Common myeloid progenitor, CD34-positive (primary cell): ENCODE measurements at regions of chr18 and their contacts with region 1.

Region 1: DNA sequence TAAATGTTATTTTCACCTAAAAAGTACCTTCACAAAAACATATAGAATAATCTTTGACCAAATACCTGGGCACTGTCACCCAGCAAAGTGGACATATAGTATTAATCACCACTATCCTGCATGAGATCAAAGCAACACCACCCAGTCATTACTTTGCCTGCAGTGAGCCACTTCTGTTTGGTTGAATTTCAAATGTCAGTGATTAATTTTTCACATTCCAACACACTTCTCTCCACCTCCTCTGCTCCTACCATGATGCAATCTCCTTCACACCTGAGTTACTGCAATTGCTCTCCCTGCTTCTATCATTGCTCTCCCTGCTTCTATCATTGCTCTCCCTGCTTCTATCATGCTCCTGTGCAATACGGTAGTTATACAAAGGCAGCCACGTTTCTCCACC is 106.0 kb upstream of the NETO1 start:
- DNase-seq: no peak
- H3K4me3 ChIP-seq: no peak overlapping the region
- H3K27ac ChIP-seq: no peak overlapping the region
- H3K4me1 ChIP-seq: no peaks in the 10 kb centered on the region
- H3K27me3 ChIP-seq: no peaks in the 10 kb centered on the region

Region 2: DNA sequence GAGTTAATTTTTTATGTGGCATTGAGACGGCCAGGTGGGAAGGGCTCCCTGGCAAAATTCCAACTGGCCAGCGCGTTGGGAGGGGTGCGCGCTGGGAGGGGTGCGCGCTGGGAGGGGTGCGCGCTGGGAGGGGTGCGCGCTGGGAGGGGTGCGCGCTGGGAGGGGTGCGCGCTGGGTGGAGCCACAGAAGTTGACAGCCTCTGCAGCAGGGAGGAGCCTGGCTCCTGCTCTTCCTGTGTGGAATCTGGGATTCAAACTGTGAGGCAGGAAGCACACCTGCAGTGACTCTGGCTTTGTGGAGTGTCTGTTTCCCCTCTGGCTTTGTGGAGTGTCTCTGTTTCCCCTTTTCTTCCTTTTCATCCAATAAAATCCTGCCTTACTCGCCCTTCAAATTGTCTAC is 281.7 kb before region 1 on chr18:
- CTCF ChIA-PET with region 1: no interaction called
- POLR2A ChIA-PET with region 1: no interaction called
- DNase-seq: no peak
- H3K4me3 ChIP-seq: no peak overlapping the region
- H3K27ac ChIP-seq: no peak overlapping the region
- H3K4me1 ChIP-seq: no peaks in the 10 kb centered on the region
- H3K27me3 ChIP-seq: peaks cover 0 to 15% (median 6%) of the 10 kb centered on the region in 5 experiments

Region 3: DNA sequence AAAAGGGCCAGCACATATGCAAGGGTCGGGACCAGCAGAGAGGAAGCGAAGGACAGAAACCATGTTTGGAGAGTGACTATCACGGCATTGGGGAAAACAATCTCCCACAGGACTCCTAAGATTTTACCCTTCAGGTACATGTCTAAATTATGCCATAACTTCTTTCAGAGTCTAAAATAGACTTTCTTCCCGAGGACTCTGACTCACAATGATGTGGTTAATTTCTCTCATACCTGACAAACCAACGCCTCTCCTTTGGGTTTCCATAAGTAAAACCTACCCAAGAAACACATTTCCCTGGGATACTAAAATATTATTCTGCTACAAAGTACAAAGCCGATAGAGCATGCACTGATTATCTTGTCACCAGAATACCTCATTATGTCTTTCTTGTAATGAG is 21.7 kb after region 1 on chr18:
- CTCF ChIA-PET with region 1: no interaction called
- POLR2A ChIA-PET with region 1: interaction called, 10 read pairs
- DNase-seq: no peak
- H3K4me3 ChIP-seq: no peak overlapping the region
- H3K27ac ChIP-seq: no peak overlapping the region
- H3K4me1 ChIP-seq: no peaks in the 10 kb centered on the region
- H3K27me3 ChIP-seq: no peaks in the 10 kb centered on the region